Prostate gland (tissue), 2 donors: ENCODE measurements at regions of chr5 and their contacts with region 1.

Region 1: DNA sequence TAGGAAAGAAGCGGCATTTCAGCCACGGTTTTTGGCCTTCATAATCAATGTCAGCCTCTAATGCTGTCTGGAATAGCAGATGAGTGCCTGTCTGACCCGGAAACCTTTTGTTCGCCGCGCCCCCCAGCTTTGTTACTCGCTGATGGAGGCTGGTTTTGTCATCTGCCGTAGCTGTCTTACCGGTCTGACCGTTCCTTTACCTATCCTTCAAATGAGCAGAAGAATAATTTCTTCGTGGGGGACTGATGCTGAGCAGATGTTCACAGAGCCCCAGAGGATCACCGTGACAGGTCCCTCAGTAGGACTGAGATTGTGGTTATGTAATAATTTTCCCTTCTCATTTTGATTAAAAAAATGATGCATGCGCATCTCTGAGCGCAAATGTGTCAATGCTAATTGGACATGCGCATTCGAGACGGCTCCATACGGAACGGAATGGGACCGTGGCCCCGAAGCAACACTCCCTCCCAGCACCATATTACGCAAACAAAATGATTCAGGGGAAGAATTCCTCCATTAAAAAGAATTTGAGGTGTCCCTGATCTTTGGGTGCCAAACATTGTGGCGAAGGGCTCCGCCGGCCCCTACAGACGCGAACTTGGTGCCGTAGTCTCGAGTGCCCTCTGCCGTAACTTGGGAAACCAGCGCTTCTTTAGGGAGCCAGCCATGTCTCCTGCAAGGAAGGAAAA is 27.6 kb downstream of the TLX3 start:
- DNase-seq: no peak
- H3K4me3 ChIP-seq: peak overlapping the region in 1 of 2 donors; percentile 9
- H3K27ac ChIP-seq: no peak overlapping the region
- H3K4me1 ChIP-seq: no peaks in the 10 kb centered on the region
- H3K27me3 ChIP-seq: no peaks in the 10 kb centered on the region
- CTCF ChIP-seq: peak in 3 of 4 experiments; percentile 25 to 49 (median 40)
- POLR2A ChIP-seq: no peak

Region 2: DNA sequence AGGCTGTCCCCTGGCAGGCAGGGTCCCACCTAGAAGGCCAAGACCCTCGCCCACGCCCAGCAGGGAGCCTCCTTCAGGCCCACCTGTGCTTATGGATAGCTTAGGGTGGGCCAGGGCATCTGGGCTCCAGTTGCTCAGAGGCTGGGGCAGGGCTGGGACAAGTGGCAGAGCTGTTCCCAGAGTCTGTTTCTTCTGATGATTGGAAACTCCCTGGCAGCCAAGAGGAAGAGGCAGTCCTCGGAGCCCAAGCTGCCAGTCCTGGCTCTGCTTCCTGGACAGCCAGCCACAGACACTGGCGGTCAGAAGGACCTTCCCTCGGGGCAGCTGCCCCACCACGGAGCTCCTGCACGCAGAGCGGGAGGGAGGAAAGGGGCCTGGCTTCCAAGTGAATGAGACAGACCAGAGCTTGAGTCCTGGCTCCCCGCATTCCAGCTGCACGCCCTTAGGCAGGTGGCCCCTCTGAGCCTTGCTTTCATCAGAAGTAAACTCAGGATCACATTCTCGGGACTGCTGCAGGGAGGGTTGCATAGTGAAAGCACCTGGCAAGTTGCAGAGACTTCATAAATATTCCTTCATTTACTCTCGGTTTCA is 591.1 kb before region 1 on chr5:
- intact Hi-C with region 1: loop called (anchors 2 kb)
- DNase-seq: peak; percentile 62
- H3K4me3 ChIP-seq: no peak overlapping the region
- H3K27ac ChIP-seq: peak overlapping the region; percentile 70 to 74
- H3K4me1 ChIP-seq: peaks cover 2% of the 10 kb centered on the region
- H3K27me3 ChIP-seq: no peaks in the 10 kb centered on the region
- CTCF ChIP-seq: no peak
- POLR2A ChIP-seq: peak; percentile 48

Region 3: GRCh38 chr5:171207256-171207847 is 129.3 kb before region 1 on chr5:
- intact Hi-C with region 1: loop called (anchors 5 kb)
- DNase-seq: no peak
- H3K4me3 ChIP-seq: no peak overlapping the region
- H3K27ac ChIP-seq: no peak overlapping the region
- H3K4me1 ChIP-seq: no peaks in the 10 kb centered on the region
- H3K27me3 ChIP-seq: no peaks in the 10 kb centered on the region
- CTCF ChIP-seq: peak in 2 of 4 experiments; percentile 11 to 29
- POLR2A ChIP-seq: no peak